ENCODE measurements at regions of chr6 and their contacts with region 1.

Region 1: GRCh38 chr6:170529839-170530469 is 23.2 kb downstream of the PSMB1 start:
- DNase-seq: peak; percentile 46
- H3K4me3 ChIP-seq: no peak overlapping the region
- H3K27ac ChIP-seq: no peak overlapping the region
- H3K27me3 ChIP-seq: no peaks in the 10 kb centered on the region
- CTCF ChIP-seq: peak; percentile 99

Region 2: GRCh38 chr6:168895102-168895812 is 1634.7 kb before region 1 on chr6:
- CTCF ChIA-PET with region 1: interaction called, 11 read pairs
- POLR2A ChIA-PET with region 1: no interaction called
- DNase-seq: peak; percentile 36
- H3K4me3 ChIP-seq: no peak overlapping the region
- H3K27ac ChIP-seq: no peak overlapping the region
- H3K27me3 ChIP-seq: peaks cover 2% of the 10 kb centered on the region
- CTCF ChIP-seq: peak; percentile 97

Region 3: DNA sequence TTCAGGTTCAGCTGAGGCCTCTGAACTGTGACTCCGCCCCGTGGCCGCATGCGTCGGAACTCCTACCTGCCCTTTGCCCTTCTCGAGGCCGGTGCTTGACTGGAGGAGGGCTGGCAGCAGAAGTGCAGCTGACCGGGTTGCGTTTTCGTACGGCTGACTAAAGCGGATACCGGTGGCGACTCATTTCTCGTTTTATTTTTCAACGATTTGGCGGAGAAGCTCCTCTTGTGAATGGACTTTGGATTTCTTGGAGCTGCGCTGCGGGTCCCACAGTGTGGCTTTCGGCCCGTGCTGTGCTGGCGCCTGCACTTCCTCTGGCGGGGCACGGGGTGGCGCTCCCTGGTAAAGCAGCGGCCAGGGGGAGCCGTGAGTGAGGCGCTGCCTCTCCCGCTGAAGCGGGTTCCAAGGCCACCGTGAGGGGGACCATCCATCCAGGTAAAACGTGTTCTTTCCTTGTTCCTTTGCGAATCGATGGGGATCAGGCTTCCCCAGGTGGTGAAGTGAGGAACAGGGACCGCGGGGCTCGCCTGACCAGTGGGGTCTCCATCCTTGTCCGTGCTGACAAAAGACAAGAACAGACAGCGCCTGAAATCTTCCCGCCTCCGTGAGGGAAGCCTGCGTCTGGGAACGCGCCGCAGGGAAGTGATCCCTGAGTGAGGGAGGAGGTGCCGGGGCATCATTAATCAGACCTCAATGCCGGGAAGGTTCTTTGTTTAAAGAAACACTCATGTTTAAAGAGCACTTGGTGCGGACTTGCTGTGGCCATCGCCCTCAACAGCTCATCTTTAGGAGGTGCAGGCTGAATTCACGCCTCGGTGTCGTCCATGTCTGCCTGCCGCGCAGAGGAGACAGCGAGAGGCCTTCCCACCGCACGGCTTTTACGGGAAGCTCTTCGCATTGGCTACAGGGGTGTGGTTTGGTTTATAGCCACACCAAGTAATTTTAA is 739.7 kb before region 1 on chr6:
- CTCF ChIA-PET with region 1: interaction called, 59 read pairs
- POLR2A ChIA-PET with region 1: no interaction called
- DNase-seq: no peak
- H3K4me3 ChIP-seq: peak overlapping the region; percentile 58
- H3K27ac ChIP-seq: peak overlapping the region; percentile 75
- H3K27me3 ChIP-seq: peaks cover 10% of the 10 kb centered on the region
- CTCF ChIP-seq: peak; percentile 99

Region 4: DNA sequence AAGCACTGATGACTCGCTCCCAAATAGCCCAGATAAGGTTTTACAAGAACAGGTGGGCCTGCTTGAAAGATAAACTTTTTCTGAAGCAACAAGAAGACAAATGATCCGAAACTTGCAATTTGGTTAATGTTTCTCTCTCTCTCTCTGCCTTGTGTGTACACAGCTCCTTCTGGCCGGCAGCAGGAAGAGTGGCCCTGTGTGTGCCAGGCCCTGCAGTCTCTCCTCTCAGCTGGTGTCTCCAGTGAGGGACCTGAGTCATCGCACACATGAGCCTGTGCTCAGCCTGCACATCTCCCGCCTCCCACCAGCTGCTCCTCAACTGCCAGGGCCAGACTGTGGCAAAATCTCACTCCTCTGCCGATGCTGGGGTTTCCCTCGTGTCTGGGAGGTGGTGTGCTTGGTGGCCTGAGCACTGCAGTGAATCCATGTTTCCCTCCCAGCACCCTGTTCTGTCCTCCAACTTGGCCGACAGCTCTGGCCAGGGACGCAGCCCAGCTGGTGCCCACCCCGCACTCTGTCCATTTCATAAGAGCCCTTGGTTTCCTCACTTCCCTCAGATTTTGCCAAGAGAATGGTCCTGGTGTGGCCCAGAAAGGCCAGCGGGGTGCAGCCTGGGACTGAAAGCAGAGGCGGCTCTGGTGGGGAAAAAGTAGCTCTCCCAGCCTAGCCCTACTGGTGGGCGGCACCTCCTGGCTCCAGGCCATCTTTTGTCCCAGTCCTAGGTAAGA is 729.1 kb before region 1 on chr6:
- CTCF ChIA-PET with region 1: interaction called, 25 read pairs
- POLR2A ChIA-PET with region 1: interaction called, 3 read pairs
- DNase-seq: peak; percentile 45
- H3K4me3 ChIP-seq: no peak overlapping the region
- H3K27ac ChIP-seq: peak overlapping the region; percentile 39
- H3K27me3 ChIP-seq: peaks cover 8% of the 10 kb centered on the region
- CTCF ChIP-seq: no peak

Region 5: DNA sequence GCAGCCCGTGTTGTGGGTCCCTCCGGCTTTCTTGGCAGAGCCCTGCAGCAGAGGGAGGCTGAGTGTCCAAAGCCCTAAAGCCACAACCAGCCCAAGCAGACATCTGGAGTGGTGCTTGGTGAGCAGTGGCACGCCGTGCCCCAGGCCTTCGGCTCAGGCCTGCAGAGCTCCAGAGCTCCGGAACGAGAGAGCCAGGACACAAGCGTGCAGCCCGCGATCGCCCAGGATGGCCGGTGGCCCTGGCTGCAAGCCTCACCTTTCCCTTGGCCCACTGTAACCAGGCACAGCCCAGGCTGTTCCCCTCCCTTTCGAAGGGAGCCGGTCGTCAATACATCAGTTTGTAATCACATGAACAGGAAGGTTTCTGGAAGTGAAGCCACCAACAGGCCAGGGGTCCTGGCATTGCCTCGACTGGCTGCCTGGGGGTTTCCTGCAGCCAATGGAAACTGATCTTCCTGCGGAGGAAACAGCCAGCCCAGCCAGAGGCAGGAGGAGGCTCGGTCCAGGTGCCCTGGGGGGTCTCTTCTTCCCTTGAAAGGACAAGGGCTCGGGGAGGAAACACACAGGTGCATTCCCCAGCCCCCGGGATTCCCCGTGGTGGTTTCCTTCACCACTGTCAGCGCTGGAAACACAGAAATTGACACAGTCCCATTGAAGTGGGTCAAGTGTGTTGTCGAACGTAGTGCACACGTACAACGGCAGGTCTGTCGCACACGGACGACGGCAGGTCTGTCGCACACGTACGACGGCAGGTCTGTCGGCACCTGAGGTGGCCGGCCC is 320.2 kb before region 1 on chr6:
- CTCF ChIA-PET with region 1: no interaction called
- POLR2A ChIA-PET with region 1: no interaction called
- DNase-seq: no peak
- H3K4me3 ChIP-seq: no peak overlapping the region
- H3K27ac ChIP-seq: no peak overlapping the region
- H3K27me3 ChIP-seq: no peaks in the 10 kb centered on the region
- CTCF ChIP-seq: no peak

Region 6: GRCh38 chr6:170516783-170517616 is 13.0 kb before region 1 on chr6:
- CTCF ChIA-PET with region 1: interaction called, 21 read pairs
- POLR2A ChIA-PET with region 1: no interaction called
- DNase-seq: peak; percentile 52
- H3K4me3 ChIP-seq: no peak overlapping the region
- H3K27ac ChIP-seq: no peak overlapping the region
- H3K27me3 ChIP-seq: no peaks in the 10 kb centered on the region
- CTCF ChIP-seq: peak; percentile 93

Region 7: GRCh38 chr6:170545405-170545804 is 15.5 kb after region 1 on chr6:
- CTCF ChIA-PET with region 1: interaction called, 17 read pairs
- POLR2A ChIA-PET with region 1: no interaction called
- DNase-seq: peak; percentile 44
- H3K4me3 ChIP-seq: no peak overlapping the region
- H3K27ac ChIP-seq: peak overlapping the region; percentile 22
- H3K27me3 ChIP-seq: no peaks in the 10 kb centered on the region
- CTCF ChIP-seq: no peak